Caco-2 (cell line): ENCODE measurements at regions of chr2 and their contacts with region 1.

Region 1: DNA sequence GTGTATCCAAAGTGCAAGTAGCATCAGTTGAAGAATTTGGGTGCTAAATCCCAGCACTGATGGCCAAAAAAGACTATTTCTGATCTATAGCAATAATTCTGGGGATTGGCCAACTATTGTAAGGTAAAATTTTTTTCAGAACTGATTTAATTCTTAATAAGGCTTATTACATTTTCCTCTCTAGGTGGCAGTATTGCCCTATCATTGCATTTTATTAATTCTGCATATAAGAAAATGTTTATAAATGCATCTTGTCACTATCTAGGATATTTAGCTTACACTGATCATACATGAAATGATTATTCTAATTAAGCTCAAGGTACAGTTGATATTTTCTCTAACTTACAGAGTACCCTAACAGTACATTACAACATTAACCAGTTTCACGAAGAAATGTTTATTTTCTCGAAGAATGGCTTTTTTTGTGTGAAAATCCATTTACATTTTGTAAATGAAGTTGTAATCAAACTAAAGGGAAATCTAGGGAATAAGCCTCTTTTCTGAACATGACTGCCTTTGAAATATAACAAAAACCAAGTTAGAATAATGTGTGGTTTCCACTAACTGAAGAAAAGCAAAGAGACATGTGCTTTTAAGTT is 11.0 kb downstream of the TTN start:
- DNase-seq: no peak
- H3K4me3 ChIP-seq: no peak overlapping the region
- H3K4me3 Mint-ChIP-seq: no peak overlapping the region
- H3K27ac Mint-ChIP-seq: no peak overlapping the region
- H3K4me1 ChIP-seq: no peaks in the 10 kb centered on the region
- H3K4me1 Mint-ChIP-seq: no peaks in the 10 kb centered on the region
- H3K27me3 ChIP-seq: no peaks in the 10 kb centered on the region
- H3K27me3 Mint-ChIP-seq: no peaks in the 10 kb centered on the region
- CTCF ChIP-seq: peak; percentile 25 to 56

Region 2: GRCh38 chr2:178650554-178650953 is 145.6 kb before region 1 on chr2:
- CTCF ChIA-PET with region 1: no interaction called
- POLR2A ChIA-PET with region 1: no interaction called
- intact Hi-C with region 1: no loop called
- DNase-seq: no peak
- H3K4me3 ChIP-seq: no peak overlapping the region
- H3K4me3 Mint-ChIP-seq: no peak overlapping the region
- H3K27ac Mint-ChIP-seq: no peak overlapping the region
- H3K4me1 ChIP-seq: no peaks in the 10 kb centered on the region
- H3K4me1 Mint-ChIP-seq: no peaks in the 10 kb centered on the region
- H3K27me3 ChIP-seq: no peaks in the 10 kb centered on the region
- H3K27me3 Mint-ChIP-seq: no peaks in the 10 kb centered on the region
- CTCF ChIP-seq: no peak

Region 3: GRCh38 chr2:179682756-179683155 is 886.6 kb after region 1 on chr2:
- CTCF ChIA-PET with region 1: no interaction called
- POLR2A ChIA-PET with region 1: no interaction called
- intact Hi-C with region 1: loop called (anchors 5 kb)
- DNase-seq: no peak
- H3K4me3 ChIP-seq: no peak overlapping the region
- H3K4me3 Mint-ChIP-seq: no peak overlapping the region
- H3K27ac Mint-ChIP-seq: no peak overlapping the region
- H3K4me1 ChIP-seq: no peaks in the 10 kb centered on the region
- H3K4me1 Mint-ChIP-seq: no peaks in the 10 kb centered on the region
- H3K27me3 ChIP-seq: no peaks in the 10 kb centered on the region
- H3K27me3 Mint-ChIP-seq: no peaks in the 10 kb centered on the region
- CTCF ChIP-seq: no peak